AG04449 (cell line): ENCODE measurements at regions of chr15 and their contacts with region 1.

Region 1: GRCh38 chr15:51162865-51163762 is 68.4 kb upstream of the TNFAIP8L3 start:
- DNase-seq: no peak
- H3K4me3 ChIP-seq: peak overlapping the region; percentile 39
- CTCF ChIP-seq: peak; percentile 85

Region 2: GRCh38 chr15:51144021-51144532 is 19.0 kb before region 1 on chr15:
- CTCF ChIA-PET with region 1: interaction called, 106 read pairs
- POLR2A ChIA-PET with region 1: no interaction called
- DNase-seq: no peak
- H3K4me3 ChIP-seq: no peak overlapping the region
- CTCF ChIP-seq: no peak

Region 3: GRCh38 chr15:51192521-51193280 is 29.6 kb after region 1 on chr15:
- CTCF ChIA-PET with region 1: interaction called, 150 read pairs
- POLR2A ChIA-PET with region 1: no interaction called
- DNase-seq: no peak
- H3K4me3 ChIP-seq: no peak overlapping the region
- CTCF ChIP-seq: peak; percentile 93

Region 4: GRCh38 chr15:51218299-51218938 is 55.3 kb after region 1 on chr15:
- CTCF ChIA-PET with region 1: interaction called, 10 read pairs
- POLR2A ChIA-PET with region 1: no interaction called
- DNase-seq: no peak
- H3K4me3 ChIP-seq: no peak overlapping the region
- CTCF ChIP-seq: no peak

Region 5: DNA sequence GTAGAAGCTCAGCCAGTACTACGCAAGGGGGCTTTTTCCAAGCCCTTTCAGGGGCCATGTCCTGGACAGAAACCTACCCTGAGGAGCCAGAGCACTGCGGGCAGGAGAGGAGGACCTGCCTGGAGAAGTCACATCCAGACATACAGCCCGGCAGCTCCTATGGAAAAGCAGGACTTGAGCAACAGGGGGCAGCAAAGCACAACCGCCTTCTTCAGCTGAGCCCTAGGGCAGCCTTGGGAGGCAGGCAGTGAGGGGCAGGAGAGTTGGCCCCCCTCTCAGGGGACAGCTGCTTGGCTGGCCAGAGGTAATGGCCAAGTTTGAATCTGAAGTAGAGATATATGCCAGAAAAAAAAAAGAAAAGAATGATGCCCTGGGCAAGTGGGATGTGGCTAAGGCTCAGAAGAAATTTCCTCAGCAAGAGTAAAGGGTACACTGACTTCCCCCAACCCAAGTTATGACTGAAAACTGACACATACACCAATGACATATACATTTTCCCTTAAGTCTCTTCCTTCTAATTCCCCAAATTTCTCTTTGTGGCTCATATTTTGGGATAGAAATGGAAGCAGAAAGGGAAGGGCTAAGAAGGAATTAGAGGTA is 118.4 kb after region 1 on chr15:
- CTCF ChIA-PET with region 1: interaction called, 23 read pairs
- POLR2A ChIA-PET with region 1: no interaction called
- DNase-seq: no peak
- H3K4me3 ChIP-seq: no peak overlapping the region
- CTCF ChIP-seq: peak; percentile 87

Region 6: GRCh38 chr15:51401872-51402517 is 238.9 kb after region 1 on chr15:
- CTCF ChIA-PET with region 1: interaction called, 177 read pairs
- POLR2A ChIA-PET with region 1: no interaction called
- DNase-seq: no peak
- H3K4me3 ChIP-seq: no peak overlapping the region
- CTCF ChIP-seq: peak; percentile 68